Activated CD4-positive, alpha-beta memory T cell treated with anti-CD3 and anti-CD28 coated beads, Interleukin-2, amount 10 ng/mL, durations not matched to agents 7 days and 5 days (primary cell): ENCODE measurements at regions of chr2 and their contacts with region 1.

Region 1: DNA sequence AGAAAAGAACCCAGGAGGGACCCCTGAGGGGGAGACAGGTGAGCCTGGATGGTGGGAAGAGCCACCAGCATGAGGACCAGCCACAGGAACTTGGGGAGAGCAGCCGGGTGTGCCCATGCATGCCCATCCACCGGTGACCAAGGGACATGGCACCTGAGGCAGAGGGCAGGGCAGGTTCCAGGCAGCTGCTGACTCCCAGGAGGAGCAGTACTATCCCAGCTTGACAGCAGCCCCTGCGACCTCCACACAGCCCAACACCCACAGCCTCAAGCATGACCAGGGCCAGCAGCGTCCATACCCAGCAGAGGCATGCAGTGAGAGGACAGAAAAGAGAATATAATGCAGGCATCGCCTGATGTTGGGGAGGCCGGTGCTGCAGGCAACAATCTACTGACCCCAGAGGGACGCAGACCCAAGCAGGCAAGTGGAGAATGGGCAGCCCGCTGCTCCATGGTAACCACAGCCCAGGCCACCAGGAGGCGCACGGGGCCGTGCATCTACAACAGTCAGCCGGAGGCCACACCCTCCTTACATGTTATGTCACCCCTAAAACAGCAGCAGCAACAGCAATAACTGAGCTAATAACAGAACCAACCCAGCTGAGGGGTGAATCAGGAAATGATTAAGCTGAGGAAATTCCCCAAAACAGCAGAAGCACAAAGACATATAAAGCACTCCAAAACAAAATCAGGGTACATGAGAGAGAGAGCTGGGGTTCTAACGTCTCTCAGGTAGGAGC is 44.1 kb downstream of the ANKMY1 start:
- DNase-seq: peak; percentile 88
- H3K4me3 Mint-ChIP-seq: no peak overlapping the region
- H3K27ac Mint-ChIP-seq: peak overlapping the region; percentile 58
- H3K4me1 Mint-ChIP-seq: peaks cover 16% of the 10 kb centered on the region
- H3K27me3 Mint-ChIP-seq: no peaks in the 10 kb centered on the region

Region 2: GRCh38 chr2:240369801-240370585 is 143.7 kb before region 1 on chr2:
- CTCF ChIA-PET with region 1: no interaction called
- POLR2A ChIA-PET with region 1: no interaction called
- DNase-seq: no peak
- H3K4me3 Mint-ChIP-seq: no peak overlapping the region
- H3K27ac Mint-ChIP-seq: no peak overlapping the region
- H3K4me1 Mint-ChIP-seq: no peaks in the 10 kb centered on the region
- H3K27me3 Mint-ChIP-seq: no peaks in the 10 kb centered on the region

Region 3: DNA sequence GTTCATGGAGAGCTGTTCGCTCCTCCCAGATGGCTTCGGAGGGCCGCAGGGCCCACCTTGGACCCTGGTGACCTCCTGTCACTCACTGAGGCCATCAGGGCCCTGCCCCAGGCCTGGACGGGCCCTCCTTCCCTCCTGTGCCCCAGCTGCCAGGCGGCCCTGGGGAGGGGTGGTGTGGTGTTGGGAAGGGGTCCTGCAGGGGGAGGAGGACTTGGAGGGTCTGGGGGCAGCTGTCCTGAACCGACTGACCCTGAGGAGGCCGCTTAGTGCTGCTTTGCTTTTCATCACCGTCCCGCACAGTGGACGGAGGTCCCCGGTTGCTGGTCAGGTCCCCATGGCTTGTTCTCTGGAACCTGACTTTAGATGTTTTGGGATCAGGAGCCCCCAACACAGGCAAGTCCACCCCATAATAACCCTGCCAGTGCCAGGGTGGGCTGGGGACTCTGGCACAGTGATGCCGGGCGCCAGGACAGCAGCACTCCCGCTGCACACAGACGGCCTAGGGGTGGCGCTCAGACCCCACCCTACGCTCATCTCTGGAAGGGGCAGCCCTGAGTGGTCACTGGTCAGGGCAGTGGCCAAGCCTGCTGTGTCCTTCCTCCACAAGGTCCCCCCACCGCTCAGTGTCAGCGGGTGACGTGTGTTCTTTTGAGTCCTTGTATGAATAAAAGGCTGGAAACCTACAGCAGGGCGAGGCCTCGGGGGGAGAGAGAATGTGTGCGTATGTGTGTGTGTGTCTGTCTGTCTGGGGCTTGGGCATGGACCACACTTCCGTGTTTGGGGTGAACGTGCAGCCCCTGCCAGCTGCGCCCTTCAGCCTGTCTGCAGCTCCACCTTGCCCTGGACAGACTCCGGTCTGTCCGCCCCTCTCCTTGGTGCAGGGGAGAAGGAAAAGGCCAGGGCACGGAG is 46.1 kb before region 1 on chr2:
- CTCF ChIA-PET with region 1: no interaction called
- POLR2A ChIA-PET with region 1: no interaction called
- DNase-seq: peak; percentile 14
- H3K4me3 Mint-ChIP-seq: no peak overlapping the region
- H3K27ac Mint-ChIP-seq: no peak overlapping the region
- H3K4me1 Mint-ChIP-seq: no peaks in the 10 kb centered on the region
- H3K27me3 Mint-ChIP-seq: no peaks in the 10 kb centered on the region

Region 4: GRCh38 chr2:240498171-240498980 is 15.3 kb before region 1 on chr2:
- CTCF ChIA-PET with region 1: interaction called, 10 read pairs
- POLR2A ChIA-PET with region 1: no interaction called
- DNase-seq: no peak
- H3K4me3 Mint-ChIP-seq: no peak overlapping the region
- H3K27ac Mint-ChIP-seq: no peak overlapping the region
- H3K4me1 Mint-ChIP-seq: no peaks in the 10 kb centered on the region
- H3K27me3 Mint-ChIP-seq: no peaks in the 10 kb centered on the region

Region 5: DNA sequence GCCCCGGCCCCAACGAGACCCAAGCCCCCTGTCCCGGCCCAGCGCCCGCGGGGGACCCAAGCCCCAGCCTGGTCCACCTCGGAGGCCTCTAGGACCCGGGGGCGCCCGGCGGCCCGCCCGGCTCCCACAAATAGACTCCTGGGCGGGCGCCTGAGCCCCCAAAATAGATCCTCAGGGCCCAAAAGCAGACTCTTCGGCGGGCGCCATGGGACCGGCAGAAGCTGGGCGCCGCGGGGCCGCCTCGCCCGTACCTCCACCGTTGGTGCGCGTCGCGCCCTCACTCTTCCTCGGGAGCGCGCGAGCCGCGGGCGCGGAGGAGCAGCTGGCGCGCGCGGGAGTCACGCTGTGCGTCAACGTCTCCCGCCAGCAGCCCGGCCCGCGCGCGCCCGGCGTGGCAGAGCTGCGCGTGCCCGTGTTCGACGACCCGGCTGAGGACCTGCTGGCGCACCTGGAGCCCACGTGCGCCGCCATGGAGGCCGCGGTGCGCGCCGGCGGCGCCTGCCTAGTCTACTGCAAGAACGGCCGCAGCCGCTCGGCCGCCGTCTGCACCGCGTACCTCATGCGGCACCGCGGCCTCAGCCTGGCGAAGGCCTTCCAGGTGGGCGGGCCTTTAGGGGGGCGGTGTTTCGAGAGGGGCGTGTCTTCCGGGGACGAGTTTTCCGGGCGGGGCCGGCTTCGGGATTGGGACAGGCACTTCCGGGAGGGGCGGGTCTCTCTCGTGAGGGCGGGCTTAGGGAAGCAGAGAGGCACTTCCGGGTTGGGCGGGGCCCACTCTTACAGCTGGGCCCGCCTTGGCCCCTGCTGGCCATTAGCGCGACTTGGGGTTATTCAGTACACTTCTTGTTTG is 47.0 kb after region 1 on chr2:
- CTCF ChIA-PET with region 1: interaction called, 49 read pairs
- POLR2A ChIA-PET with region 1: interaction called, 17 read pairs
- DNase-seq: peak; percentile 100
- H3K4me3 Mint-ChIP-seq: peak overlapping the region; percentile 92
- H3K27ac Mint-ChIP-seq: peak overlapping the region; percentile 87
- H3K4me1 Mint-ChIP-seq: peaks cover 75% of the 10 kb centered on the region
- H3K27me3 Mint-ChIP-seq: no peaks in the 10 kb centered on the region

Region 6: DNA sequence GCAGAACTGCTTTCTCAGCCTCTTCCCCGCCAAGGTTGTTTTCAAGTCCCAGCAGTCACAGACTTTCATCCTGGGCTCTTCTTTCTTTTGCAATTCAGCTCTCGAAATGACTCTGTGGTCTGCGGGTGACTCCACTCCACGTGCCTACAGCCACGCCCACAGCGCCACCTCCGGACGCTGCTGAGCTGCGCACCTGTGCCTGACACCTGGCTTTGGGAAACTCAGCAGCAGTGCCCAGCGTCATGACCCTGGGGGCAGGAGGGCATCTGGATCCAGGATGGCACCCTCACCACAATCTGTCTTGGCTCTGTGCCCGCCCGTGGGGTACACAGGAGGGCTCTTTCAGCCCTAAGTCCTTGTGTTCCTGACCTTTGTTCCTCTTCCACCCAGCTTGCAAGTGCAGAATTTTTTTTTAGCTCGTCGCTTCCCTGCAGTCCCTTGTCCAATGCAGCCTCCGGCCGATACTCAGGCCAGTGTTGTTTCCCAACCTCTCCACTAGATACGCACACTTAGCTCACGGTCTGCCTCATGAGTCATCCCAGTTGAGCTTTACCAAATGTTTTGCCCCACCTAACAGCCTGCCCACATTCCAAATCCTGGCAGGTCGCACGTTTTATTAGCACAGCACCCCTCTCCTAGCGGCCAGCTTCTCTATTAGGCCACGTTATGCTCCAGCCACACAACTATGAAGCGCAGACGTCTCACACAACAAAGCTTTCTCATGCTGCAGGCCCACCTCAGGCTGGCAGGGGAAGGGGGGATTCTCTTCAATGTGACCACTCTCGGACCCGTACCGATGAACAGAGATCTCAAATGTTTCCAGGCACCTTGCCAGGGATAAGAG is 66.3 kb after region 1 on chr2:
- CTCF ChIA-PET with region 1: interaction called, 41 read pairs
- POLR2A ChIA-PET with region 1: interaction called, 4 read pairs
- DNase-seq: peak; percentile 88
- H3K4me3 Mint-ChIP-seq: no peak overlapping the region
- H3K27ac Mint-ChIP-seq: peak overlapping the region; percentile 79
- H3K4me1 Mint-ChIP-seq: peaks cover 51% of the 10 kb centered on the region
- H3K27me3 Mint-ChIP-seq: no peaks in the 10 kb centered on the region

Region 7: GRCh38 chr2:240624950-240625621 is 111.4 kb after region 1 on chr2 and contains the start of gene GPR35:
- CTCF ChIA-PET with region 1: interaction called, 12 read pairs
- POLR2A ChIA-PET with region 1: no interaction called
- DNase-seq: peak; percentile 84
- H3K4me3 Mint-ChIP-seq: peak within 1 kb of the TSS; percentile 49
- H3K27ac Mint-ChIP-seq: peak within 1 kb of the TSS; percentile 87
- H3K4me1 Mint-ChIP-seq: peaks cover 59% of the 10 kb centered on the region
- H3K27me3 Mint-ChIP-seq: no peaks in the 10 kb centered on the region
- total RNA-seq, gene GPR35: 5.2 to 5.7 TPM